Activated B cell treated with CpG ODN at 0.5 μM for 24 hours (primary cell): ENCODE measurements at regions of chr7 and their contacts with region 1.

Region 1: DNA sequence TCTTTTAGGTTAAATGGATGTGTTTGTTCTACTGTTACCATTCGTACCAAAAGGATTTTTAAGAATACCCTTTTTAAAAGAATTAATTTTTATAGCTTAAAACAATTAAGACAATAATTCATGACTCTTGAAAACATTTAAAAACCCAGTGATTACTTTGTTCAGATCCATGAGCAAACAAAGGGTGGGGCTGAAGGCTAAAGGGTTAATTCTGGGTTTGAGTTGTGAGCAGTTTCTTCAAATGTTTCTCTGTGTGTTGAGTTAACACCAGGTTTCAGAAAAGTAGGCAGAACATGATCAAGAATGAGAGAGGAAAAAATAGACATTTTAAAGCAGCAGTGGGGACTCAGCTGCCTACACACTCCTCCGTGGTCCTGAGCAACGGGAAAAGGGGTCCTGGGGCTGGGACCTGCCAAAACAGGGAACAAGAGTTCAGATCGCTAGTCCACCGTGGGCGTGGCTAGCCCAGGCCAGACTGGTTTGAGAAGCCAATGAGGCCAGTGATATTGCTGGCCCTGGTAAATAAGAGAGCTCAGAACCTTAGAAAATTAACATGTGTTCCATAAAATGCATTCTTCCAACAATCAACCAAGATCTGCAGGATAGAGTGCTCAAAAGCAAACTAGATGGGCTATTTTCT is 14.9 kb upstream of the EZH2 start:
- DNase-seq: no peak
- ATAC-seq: no peak
- H3K4me3 Mint-ChIP-seq: no peak overlapping the region
- H3K27ac Mint-ChIP-seq: no peak overlapping the region
- H3K4me1 Mint-ChIP-seq: no peaks in the 10 kb centered on the region
- H3K27me3 Mint-ChIP-seq: peaks cover 4% of the 10 kb centered on the region
- CTCF ChIP-seq: no peak

Region 2: DNA sequence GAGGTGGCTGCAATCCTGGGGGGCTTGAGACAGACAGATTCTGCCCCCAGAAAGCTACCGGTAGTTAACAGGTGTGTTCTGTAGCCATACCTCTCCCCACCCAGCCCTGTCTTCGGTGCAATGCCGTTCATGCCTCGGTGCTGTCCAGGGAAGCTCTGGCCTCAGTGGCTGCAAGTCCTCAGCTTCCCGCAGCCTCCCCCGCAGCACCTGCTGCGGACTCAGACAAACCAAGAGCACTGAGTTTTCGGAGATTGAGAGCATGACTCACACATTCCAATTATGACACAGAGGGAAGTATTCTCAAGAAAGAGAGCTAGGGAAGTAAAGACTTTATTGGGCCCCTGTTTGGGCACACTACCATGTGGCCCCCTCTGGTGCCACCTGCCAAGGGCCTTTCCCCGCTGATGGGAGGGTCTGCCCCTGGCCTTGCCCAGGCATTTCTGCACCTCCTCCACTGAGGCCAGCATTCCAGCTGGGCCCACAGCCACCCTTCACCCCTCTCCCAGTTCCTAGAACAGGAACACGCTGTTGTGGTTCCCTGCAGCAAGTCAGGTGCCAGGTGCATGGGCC is 15.3 kb after region 1 on chr7:
- CTCF ChIA-PET with region 1: no interaction called
- POLR2A ChIA-PET with region 1: interaction called, 5 read pairs
- intact Hi-C with region 1: loop called (anchors 2 kb)
- DNase-seq: no peak
- ATAC-seq: peak; percentile 38
- H3K4me3 Mint-ChIP-seq: peak overlapping the region; percentile 57
- H3K27ac Mint-ChIP-seq: peak overlapping the region; percentile 75
- H3K4me1 Mint-ChIP-seq: peaks cover 42% of the 10 kb centered on the region
- H3K27me3 Mint-ChIP-seq: no peaks in the 10 kb centered on the region
- CTCF ChIP-seq: no peak